Vagina (tissue), 2 donors: ENCODE measurements at regions of chr9 and their contacts with region 1.

Region 1: GRCh38 chr9:33623658-33624586 is 99.9 kb downstream of the ANKRD18B start:
- DNase-seq: no peak
- H3K4me3 ChIP-seq: no peak overlapping the region
- H3K27ac ChIP-seq: no peak overlapping the region
- H3K4me1 ChIP-seq: no peaks in the 10 kb centered on the region
- H3K27me3 ChIP-seq: no peaks in the 10 kb centered on the region
- CTCF ChIP-seq: peak; percentile 78 to 84 (median 78)
- POLR2A ChIP-seq: no peak

Region 2: GRCh38 chr9:33354651-33355211 is 269.2 kb before region 1 on chr9:
- intact Hi-C with region 1: no loop called
- DNase-seq: no peak
- H3K4me3 ChIP-seq: no peak overlapping the region
- H3K27ac ChIP-seq: no peak overlapping the region
- H3K4me1 ChIP-seq: no peaks in the 10 kb centered on the region
- H3K27me3 ChIP-seq: no peaks in the 10 kb centered on the region
- CTCF ChIP-seq: no peak
- POLR2A ChIP-seq: no peak

Region 3: DNA sequence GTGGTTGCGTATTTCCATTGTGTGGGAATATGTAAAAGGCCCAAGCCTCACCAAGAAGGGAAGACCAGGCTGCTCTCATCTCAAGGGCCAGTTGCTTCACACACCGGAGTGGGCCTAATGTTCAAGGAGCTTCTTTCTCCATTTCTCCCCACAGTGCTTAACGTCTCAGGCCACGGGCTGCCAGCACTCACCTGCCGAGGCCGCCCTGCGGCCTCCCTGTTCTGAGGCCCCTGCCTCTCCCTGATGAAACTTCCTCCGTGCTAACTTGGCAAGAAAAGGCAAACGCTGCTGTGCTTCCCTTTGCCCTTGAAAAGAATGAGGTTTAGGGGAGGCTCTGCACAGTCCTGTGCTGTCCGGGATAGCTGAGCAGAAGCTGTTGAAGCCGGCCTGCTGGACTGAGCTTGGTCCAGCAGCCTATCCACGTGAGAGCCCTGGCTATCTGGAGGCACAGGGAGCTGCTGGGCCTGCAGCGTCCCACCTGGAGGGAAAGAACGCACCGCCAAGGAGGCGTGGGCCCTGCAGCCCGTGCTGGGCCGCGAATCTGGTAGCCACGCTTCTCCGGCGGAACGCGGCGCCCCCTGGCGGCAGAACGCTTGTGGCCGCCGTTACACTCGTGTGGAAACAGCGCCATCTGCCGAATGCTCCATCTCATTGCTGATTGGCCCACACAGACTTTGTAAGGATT is 97.9 kb after region 1 on chr9:
- intact Hi-C with region 1: loop called (anchors 5 kb)
- DNase-seq: no peak
- H3K4me3 ChIP-seq: no peak overlapping the region
- H3K27ac ChIP-seq: no peak overlapping the region
- H3K4me1 ChIP-seq: no peaks in the 10 kb centered on the region
- H3K27me3 ChIP-seq: no peaks in the 10 kb centered on the region
- CTCF ChIP-seq: peak; percentile 100
- POLR2A ChIP-seq: no peak